B cell (primary cell): ENCODE measurements at regions of chr2 and their contacts with region 1.

Region 1: GRCh38 chr2:135004005-135004746 is 43.1 kb downstream of the MAP3K19 start:
- DNase-seq: peak; percentile 74
- ATAC-seq: peak; percentile 76
- H3K4me3 ChIP-seq: no peak overlapping the region
- H3K4me3 Mint-ChIP-seq: no peak overlapping the region
- H3K27ac ChIP-seq: no peak overlapping the region
- H3K27ac Mint-ChIP-seq: no peak overlapping the region
- H3K4me1 ChIP-seq: peaks cover 3 to 6% of the 10 kb centered on the region in 2 donors
- H3K4me1 Mint-ChIP-seq: peaks cover 6% of the 10 kb centered on the region
- H3K27me3 ChIP-seq: peaks cover 0 to 7% (median 3%) of the 10 kb centered on the region in 4 experiments
- H3K27me3 Mint-ChIP-seq: peaks cover 23% of the 10 kb centered on the region
- CTCF ChIP-seq: peak; percentile 92

Region 2: DNA sequence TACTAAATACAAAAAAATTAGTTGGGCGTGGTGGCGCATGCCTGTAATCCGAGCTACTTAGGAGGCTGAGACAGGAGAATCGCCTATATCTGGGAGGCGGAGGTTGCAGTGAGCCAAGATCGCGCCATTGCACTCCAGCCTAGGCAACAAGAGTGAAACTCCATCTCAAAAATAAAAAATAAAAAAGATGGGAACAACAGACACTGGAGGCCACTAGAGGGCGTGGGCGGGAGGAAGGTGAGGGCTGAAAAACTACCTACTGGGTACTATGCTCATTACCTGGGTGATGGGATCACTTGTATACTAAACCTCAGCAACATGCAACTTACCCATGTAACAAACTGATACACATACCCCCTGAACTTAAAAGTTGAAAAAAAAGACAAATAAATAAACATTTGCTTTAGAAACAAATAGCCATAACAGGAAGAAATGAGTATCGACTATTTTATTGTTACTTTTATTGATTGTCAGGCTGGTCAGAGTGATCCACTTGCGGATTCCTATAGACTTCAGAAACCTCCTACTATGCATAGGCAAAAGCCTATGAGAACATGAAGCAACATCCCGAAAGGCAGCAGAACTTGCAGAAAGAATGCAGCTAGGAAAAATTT is 346.4 kb before region 1 on chr2:
- CTCF ChIA-PET with region 1: no interaction called
- POLR2A ChIA-PET with region 1: no interaction called
- intact Hi-C with region 1: no loop called
- DNase-seq: peak; percentile 48
- ATAC-seq: no peak
- H3K4me3 ChIP-seq: no peak overlapping the region
- H3K4me3 Mint-ChIP-seq: no peak overlapping the region
- H3K27ac ChIP-seq: no peak overlapping the region
- H3K27ac Mint-ChIP-seq: no peak overlapping the region
- H3K4me1 ChIP-seq: peaks cover 0 to 8% of the 10 kb centered on the region in 2 donors
- H3K4me1 Mint-ChIP-seq: peaks cover 3% of the 10 kb centered on the region
- H3K27me3 ChIP-seq: no peaks in the 10 kb centered on the region
- H3K27me3 Mint-ChIP-seq: no peaks in the 10 kb centered on the region
- CTCF ChIP-seq: peak; percentile 52

Region 3: GRCh38 chr2:134988994-134989605 is 15.1 kb before region 1 on chr2:
- CTCF ChIA-PET with region 1: interaction called, 24 read pairs
- POLR2A ChIA-PET with region 1: no interaction called
- intact Hi-C with region 1: no loop called
- DNase-seq: peak; percentile 30
- ATAC-seq: no peak
- H3K4me3 ChIP-seq: no peak overlapping the region
- H3K4me3 Mint-ChIP-seq: no peak overlapping the region
- H3K27ac ChIP-seq: no peak overlapping the region
- H3K27ac Mint-ChIP-seq: no peak overlapping the region
- H3K4me1 ChIP-seq: no peaks in the 10 kb centered on the region
- H3K4me1 Mint-ChIP-seq: no peaks in the 10 kb centered on the region
- H3K27me3 ChIP-seq: no peaks in the 10 kb centered on the region
- H3K27me3 Mint-ChIP-seq: peaks cover 10% of the 10 kb centered on the region
- CTCF ChIP-seq: peak; percentile 69

Region 4: GRCh38 chr2:135531231-135532228 is 527.4 kb after region 1 on chr2 and contains the start of gene R3HDM1:
- CTCF ChIA-PET with region 1: no interaction called
- POLR2A ChIA-PET with region 1: no interaction called
- intact Hi-C with region 1: loop called (anchors 1 kb)
- DNase-seq: peak; percentile 99
- ATAC-seq: peak; percentile 79
- H3K4me3 ChIP-seq: peak within 1 kb of the TSS; percentile 81 to 100 (median 91)
- H3K4me3 Mint-ChIP-seq: no peak within 1 kb of the TSS
- H3K27ac ChIP-seq: peak within 1 kb of the TSS; percentile 86 to 88
- H3K27ac Mint-ChIP-seq: peak within 1 kb of the TSS; percentile 81
- H3K4me1 ChIP-seq: peaks cover 13 to 14% of the 10 kb centered on the region in 2 donors
- H3K4me1 Mint-ChIP-seq: peaks cover 12% of the 10 kb centered on the region
- H3K27me3 ChIP-seq: no peaks in the 10 kb centered on the region
- H3K27me3 Mint-ChIP-seq: no peaks in the 10 kb centered on the region
- CTCF ChIP-seq: peak; percentile 21
- total RNA-seq, gene R3HDM1: 52.0 and 57.8 TPM in 2 replicates

Region 5: GRCh38 chr2:135600915-135601314 is 596.7 kb after region 1 on chr2:
- CTCF ChIA-PET with region 1: interaction called, 24 read pairs
- POLR2A ChIA-PET with region 1: no interaction called
- intact Hi-C with region 1: no loop called
- DNase-seq: no peak
- ATAC-seq: no peak
- H3K4me3 ChIP-seq: no peak overlapping the region
- H3K4me3 Mint-ChIP-seq: no peak overlapping the region
- H3K27ac ChIP-seq: no peak overlapping the region
- H3K27ac Mint-ChIP-seq: no peak overlapping the region
- H3K4me1 ChIP-seq: no peaks in the 10 kb centered on the region
- H3K4me1 Mint-ChIP-seq: no peaks in the 10 kb centered on the region
- H3K27me3 ChIP-seq: no peaks in the 10 kb centered on the region
- H3K27me3 Mint-ChIP-seq: no peaks in the 10 kb centered on the region
- CTCF ChIP-seq: no peak

Region 6: DNA sequence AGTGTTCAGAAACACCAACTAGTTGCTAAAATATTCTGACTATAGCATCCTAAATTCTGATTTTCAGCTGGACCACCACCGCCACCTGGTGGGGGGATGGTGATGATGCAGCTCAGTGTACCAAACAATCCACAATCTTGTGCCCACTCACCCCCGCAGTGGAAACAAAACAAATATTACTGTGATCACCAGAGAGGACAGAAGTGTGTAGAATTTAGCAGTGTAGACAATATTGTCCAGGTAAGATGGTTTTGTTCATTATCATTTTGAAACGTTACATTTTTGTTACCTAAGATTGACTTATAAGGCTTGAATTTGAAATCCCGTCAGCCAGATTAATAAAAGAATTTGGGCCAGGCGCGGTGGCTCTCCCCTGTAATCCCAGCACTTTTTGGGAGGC is 705.8 kb after region 1 on chr2:
- CTCF ChIA-PET with region 1: interaction called, 219 read pairs
- POLR2A ChIA-PET with region 1: no interaction called
- intact Hi-C with region 1: loop called (anchors 1 kb)
- DNase-seq: peak; percentile 70
- ATAC-seq: peak; percentile 63
- H3K4me3 ChIP-seq: no peak overlapping the region
- H3K4me3 Mint-ChIP-seq: no peak overlapping the region
- H3K27ac ChIP-seq: no peak overlapping the region
- H3K27ac Mint-ChIP-seq: no peak overlapping the region
- H3K4me1 ChIP-seq: no peaks in the 10 kb centered on the region
- H3K4me1 Mint-ChIP-seq: no peaks in the 10 kb centered on the region
- H3K27me3 ChIP-seq: no peaks in the 10 kb centered on the region
- H3K27me3 Mint-ChIP-seq: no peaks in the 10 kb centered on the region
- CTCF ChIP-seq: peak; percentile 94

Region 7: DNA sequence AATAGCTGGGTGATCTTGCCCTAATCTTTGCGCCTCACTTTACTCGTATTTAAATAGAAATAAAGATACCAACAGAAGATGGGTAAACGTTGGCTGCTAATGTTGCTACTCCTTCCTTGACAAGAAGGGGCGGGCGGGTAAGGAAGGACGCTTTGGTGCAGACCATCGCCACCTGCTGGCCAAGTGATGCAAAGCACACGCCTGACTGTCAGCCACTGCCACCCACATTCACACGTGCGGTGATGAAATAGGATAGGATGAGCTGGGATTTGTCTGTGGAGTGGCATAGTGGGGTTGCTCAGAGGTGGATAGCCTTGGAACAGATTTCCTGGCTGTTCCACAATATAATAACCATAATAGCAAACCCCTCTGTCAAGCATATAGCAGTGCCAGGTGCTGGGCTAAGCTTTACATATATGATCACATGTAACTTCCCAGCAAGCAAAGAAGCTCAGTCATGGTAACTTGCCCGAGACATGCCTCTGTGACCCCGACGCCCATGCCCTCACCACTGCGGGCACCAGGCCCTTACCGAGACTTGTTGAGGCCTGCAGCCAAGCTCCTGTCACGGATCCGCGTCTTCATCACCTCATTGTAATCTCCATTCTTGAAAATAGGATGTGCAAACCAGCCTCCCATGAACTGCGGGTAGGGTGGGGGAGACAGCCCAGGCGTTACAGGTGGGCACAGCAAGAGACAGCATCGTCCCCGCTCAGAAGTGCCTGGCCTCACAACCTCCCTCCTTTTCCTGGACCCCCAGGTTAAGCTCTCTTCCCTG is 793.5 kb after region 1 on chr2:
- CTCF ChIA-PET with region 1: interaction called, 24 read pairs
- POLR2A ChIA-PET with region 1: no interaction called
- intact Hi-C with region 1: loop called (anchors 5 kb)
- DNase-seq: peak; percentile 78
- ATAC-seq: peak; percentile 78
- H3K4me3 ChIP-seq: no peak overlapping the region
- H3K4me3 Mint-ChIP-seq: no peak overlapping the region
- H3K27ac ChIP-seq: no peak overlapping the region
- H3K27ac Mint-ChIP-seq: no peak overlapping the region
- H3K4me1 ChIP-seq: peaks cover 0 to 8% of the 10 kb centered on the region in 2 donors
- H3K4me1 Mint-ChIP-seq: peaks cover 13% of the 10 kb centered on the region
- H3K27me3 ChIP-seq: no peaks in the 10 kb centered on the region
- H3K27me3 Mint-ChIP-seq: no peaks in the 10 kb centered on the region
- CTCF ChIP-seq: peak; percentile 90